ENCODE measurements at regions of chr11 and their contacts with region 1.

Region 1: DNA sequence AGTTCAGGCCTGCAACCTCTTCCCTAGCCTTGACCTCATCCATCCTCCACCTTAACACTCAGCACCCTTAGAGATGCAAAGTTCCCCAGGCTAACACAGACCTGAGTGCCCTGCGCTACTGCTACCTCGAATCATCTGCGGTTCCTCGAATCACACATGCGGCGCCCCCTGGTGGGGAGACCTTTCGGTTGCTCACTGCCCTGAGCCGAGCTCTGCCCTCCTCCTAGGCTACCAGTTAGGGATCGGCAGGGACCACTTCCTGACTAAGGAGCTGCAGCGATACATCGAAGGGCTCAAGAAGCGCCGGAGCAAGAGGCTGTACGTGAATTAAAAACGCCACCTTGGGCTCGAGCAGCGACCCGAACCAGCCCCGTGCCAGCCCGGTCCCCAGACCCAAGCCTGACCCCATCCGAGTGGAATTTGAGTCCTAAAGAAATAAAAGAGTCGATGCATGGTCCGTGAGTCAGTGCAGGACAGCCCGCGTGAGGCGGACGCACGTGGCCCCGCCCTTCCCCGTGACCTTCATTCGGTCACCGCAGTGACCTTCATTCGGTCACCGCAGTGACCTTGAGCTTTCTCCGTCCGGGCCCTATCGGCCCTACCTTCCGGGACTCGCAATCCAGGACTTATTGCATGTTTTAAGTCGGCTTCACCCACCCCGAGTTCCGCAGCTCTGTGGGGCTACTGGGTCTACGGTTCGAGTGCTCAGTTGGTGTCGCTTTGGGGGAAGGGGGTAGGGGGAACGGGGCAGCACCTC is 830 bp upstream of the ESRRA start:
- DNase-seq: peak; percentile 83 to 95 (median 90)
- ATAC-seq: peak; percentile 33 to 39
- H3K4me3 Mint-ChIP-seq: peak overlapping the region; percentile 85 to 97 (median 93)
- H3K27ac Mint-ChIP-seq: peak overlapping the region; percentile 87 to 98 (median 95)
- H3K4me1 Mint-ChIP-seq: peaks cover 22 to 47% (median 43%) of the 10 kb centered on the region in 4 donors
- H3K27me3 Mint-ChIP-seq: peaks cover 12 to 18% (median 14%) of the 10 kb centered on the region in 5 donors

Region 2: DNA sequence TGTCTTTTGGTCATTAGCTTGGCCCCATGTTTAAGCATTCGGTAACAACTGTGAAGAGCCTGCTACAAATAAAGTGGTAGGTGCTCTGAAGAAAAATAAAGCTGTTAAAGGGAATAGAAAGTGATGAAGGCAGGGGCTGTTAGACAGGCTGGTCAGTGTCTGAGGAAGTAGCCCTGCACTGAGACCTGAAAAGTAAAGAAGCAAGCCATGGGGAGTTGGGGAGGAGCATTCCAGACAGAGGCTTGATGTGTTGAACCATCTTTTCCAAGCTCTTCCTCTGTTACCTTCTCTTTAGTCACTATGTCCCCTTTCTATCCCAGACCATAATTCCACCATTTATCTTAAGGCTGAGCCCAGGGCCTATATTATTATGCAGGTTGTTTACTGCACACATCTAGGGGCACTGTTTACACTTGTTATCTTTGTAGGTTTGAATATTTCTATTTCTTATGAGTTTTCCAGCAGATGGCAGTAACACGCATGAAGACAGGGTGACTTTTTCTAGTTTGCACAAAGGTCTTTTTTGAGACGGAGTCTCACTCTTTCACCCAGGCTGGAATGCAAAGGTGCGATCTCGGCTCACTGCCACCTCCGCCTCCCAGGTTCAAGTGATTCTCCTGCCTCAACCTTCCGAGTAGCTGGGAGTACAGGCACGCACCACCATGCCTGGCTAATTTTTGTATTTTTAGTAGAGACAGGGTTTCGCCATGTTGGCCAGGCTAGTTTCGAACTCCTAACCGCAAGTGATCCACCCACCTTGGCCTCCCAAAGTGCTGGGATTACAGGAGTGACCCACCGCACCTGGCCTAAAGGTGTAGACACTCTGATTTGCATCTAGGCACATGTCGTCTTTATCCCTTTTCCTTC is 559.0 kb before region 1 on chr11:
- POLR2A ChIA-PET with region 1: no interaction called
- DNase-seq: no peak
- ATAC-seq: no peak
- H3K4me3 Mint-ChIP-seq: no peak overlapping the region
- H3K27ac Mint-ChIP-seq: no peak overlapping the region
- H3K4me1 Mint-ChIP-seq: no peaks in the 10 kb centered on the region
- H3K27me3 Mint-ChIP-seq: no peaks in the 10 kb centered on the region

Region 3: GRCh38 chr11:64284048-64284961 is 20.2 kb before region 1 on chr11 and contains the start of gene BAD:
- POLR2A ChIA-PET with region 1: interaction called, 18 read pairs
- DNase-seq: peak; percentile 86 to 96 (median 88)
- ATAC-seq: peak; percentile 78 to 79
- H3K4me3 Mint-ChIP-seq: peak within 1 kb of the TSS; percentile 85 to 94 (median 90)
- H3K27ac Mint-ChIP-seq: peak within 1 kb of the TSS; percentile 74 to 99 (median 97)
- H3K4me1 Mint-ChIP-seq: peaks cover 8 to 29% (median 21%) of the 10 kb centered on the region in 4 donors
- H3K27me3 Mint-ChIP-seq: no peaks in the 10 kb centered on the region
- polyA plus RNA-seq, gene BAD: 39.1 to 44.8 (median 39.9) TPM

Measured in naive thymus-derived CD8-positive, alpha-beta T cell (primary cell).